Dorsolateral prefrontal cortex (tissue), 120 donors: ENCODE measurements at regions of chr1 and their contacts with region 1.

Region 1: GRCh38 chr1:21176586-21177555 is at the start of gene EIF4G3:
- DNase-seq: peak; percentile 96 to 99 (median 98)
- H3K4me3 ChIP-seq: peak within 1 kb of the TSS; percentile 60 to 95 (median 84)
- H3K27ac ChIP-seq: peak within 1 kb of the TSS; percentile 79 to 98 (median 94)
- H3K27me3 ChIP-seq: no peaks in the 10 kb centered on the region
- CTCF ChIP-seq: peak in 30 of 56 donors; percentile 3 to 52 (median 24)
- total RNA-seq, gene EIF4G3: 102 to 177 (median 137) TPM

Region 2: GRCh38 chr1:20696397-20697329 is 480.2 kb before region 1 on chr1:
- intact Hi-C with region 1: loop called in 1 of 2 experiments (anchors 5 kb)
- DNase-seq: peak; percentile 63 to 89 (median 84)
- H3K4me3 ChIP-seq: peak overlapping the region; percentile 48 to 79 (median 63)
- H3K27ac ChIP-seq: peak overlapping the region in 58 of 59 donors; percentile 15 to 95 (median 86)
- H3K27me3 ChIP-seq: no peaks in the 10 kb centered on the region
- CTCF ChIP-seq: peak; percentile 76 to 98 (median 93)

Region 3: DNA sequence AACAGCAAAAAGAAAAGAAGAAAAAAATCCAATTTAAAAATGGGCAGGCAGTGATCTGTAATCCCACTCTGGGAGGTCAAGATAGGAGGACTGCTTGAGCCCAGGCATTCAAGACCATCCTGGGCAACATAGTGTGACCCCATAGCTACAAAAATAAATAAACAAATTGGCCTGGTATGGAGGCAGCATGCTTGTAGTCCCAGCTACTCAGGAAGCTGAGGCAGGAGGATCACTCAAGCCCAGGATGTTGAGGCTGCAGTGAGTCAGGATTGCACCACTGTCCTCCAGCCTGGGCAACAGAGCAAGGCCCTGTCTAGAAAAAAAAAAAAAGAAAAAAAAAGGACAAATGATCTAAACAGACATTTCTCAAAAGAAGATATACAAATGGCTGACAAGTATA is 99.8 kb before region 1 on chr1:
- intact Hi-C with region 1: loop called in 1 of 2 experiments (anchors 5 kb)
- DNase-seq: no peak
- H3K4me3 ChIP-seq: no peak overlapping the region
- H3K27ac ChIP-seq: peak overlapping the region in 22 of 59 donors; percentile 3 to 65 (median 38)
- H3K27me3 ChIP-seq: no peaks in the 10 kb centered on the region
- CTCF ChIP-seq: no peak

Region 4: DNA sequence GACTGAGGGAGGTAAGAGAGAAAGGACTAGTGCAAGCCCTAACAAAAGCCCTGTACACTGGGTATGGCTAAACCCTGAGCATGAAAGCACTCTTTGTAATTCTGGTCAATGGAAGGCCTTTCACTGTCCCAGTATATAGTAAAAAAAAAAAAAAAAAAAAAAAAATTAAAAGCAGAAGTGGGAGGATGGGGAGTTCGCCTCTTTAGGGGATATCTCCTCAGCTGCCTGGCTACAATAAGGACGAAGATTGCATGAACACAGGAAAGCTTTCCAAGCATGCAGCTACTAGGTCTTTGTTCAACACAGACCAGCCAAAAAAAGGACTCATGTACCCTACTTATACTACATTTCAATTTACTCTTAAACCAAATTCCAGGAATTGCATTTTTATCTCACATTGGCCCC is 59.3 kb before region 1 on chr1:
- intact Hi-C with region 1: loop called (anchors 2 to 10 kb)
- DNase-seq: no peak
- H3K4me3 ChIP-seq: peak overlapping the region in 24 of 59 donors; percentile 3 to 44 (median 23)
- H3K27ac ChIP-seq: peak overlapping the region; percentile 52 to 99 (median 92)
- H3K27me3 ChIP-seq: no peaks in the 10 kb centered on the region
- CTCF ChIP-seq: peak in 2 of 56 donors; percentile 8 to 10

Region 5: GRCh38 chr1:21156019-21156418 is 20.9 kb before region 1 on chr1:
- intact Hi-C with region 1: loop called in 1 of 2 experiments (anchors 1 kb)
- DNase-seq: no peak
- H3K4me3 ChIP-seq: no peak overlapping the region
- H3K27ac ChIP-seq: peak overlapping the region in 11 of 59 donors; percentile 1 to 58 (median 20)
- H3K27me3 ChIP-seq: no peaks in the 10 kb centered on the region
- CTCF ChIP-seq: no peak

Region 6: GRCh38 chr1:21508580-21509350 is 331.9 kb after region 1 on chr1:
- intact Hi-C with region 1: no loop called
- DNase-seq: peak in 5 of 10 donors; percentile 22 to 69 (median 34)
- H3K4me3 ChIP-seq: peak overlapping the region in 48 of 59 donors; percentile 18 to 62 (median 45)
- H3K27ac ChIP-seq: peak overlapping the region in 5 of 59 donors; percentile 6 to 32 (median 23)
- H3K27me3 ChIP-seq: peaks cover 0 to 20% (median 7%) of the 10 kb centered on the region in 45 donors
- CTCF ChIP-seq: peak in 55 of 56 donors; percentile 24 to 77 (median 58)